CD4-positive, alpha-beta memory T cell (primary cell): ENCODE measurements at regions of chr16 and their contacts with region 1.

Region 1: DNA sequence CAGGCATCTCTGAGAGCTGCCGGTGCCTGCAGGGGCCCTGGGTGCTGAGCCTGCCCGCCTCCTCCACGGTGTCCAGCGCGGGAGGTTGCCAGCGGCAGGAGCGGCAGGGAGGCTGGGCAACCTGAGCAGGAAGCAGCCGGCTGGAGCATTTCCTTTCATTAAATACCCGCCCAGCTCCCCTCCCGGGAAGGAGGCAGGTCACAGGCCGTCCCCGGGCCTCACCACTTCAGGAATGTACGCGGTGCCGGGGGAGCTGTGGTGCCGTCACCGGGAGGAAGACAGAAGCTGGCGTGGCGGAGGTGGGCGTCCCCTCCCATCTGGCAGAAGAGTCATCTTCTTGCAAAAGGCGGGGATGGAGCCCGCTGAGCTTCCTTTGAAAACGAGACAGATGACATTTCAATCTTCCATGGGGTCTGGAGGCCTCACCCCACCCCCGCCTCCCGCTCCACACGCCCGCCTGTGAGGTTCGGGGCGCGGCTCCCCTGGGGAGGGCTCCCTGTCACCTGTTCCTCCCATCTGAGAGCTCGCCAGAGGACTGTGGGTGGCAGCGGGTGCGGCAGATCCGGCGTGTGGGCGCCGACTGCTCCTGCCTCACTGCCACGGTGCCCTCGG is 16.0 kb downstream of the SOX8 start:
- DNase-seq: peak; percentile 63 to 87 (median 68)
- H3K4me3 ChIP-seq: peak overlapping the region; percentile 47 to 55
- H3K4me3 Mint-ChIP-seq: peak overlapping the region; percentile 81 to 97 (median 86)
- H3K27ac ChIP-seq: peak overlapping the region; percentile 74
- H3K27ac Mint-ChIP-seq: peak overlapping the region; percentile 87 to 98 (median 93)
- H3K4me1 ChIP-seq: peaks cover 44% of the 10 kb centered on the region
- H3K4me1 Mint-ChIP-seq: peaks cover 16 to 54% (median 39%) of the 10 kb centered on the region in 4 donors
- H3K27me3 ChIP-seq: no peaks in the 10 kb centered on the region
- H3K27me3 Mint-ChIP-seq: no peaks in the 10 kb centered on the region

Region 2: GRCh38 chr16:964356-965042 is 33.0 kb before region 1 on chr16:
- CTCF ChIA-PET with region 1: interaction called, 6 read pairs
- POLR2A ChIA-PET with region 1: interaction called, 54 read pairs
- intact Hi-C with region 1: loop called (anchors 5 kb)
- DNase-seq: peak; percentile 74 to 92 (median 86)
- H3K4me3 ChIP-seq: peak overlapping the region; percentile 30 to 34
- H3K4me3 Mint-ChIP-seq: peak overlapping the region; percentile 69 to 88 (median 84)
- H3K27ac ChIP-seq: peak overlapping the region; percentile 70
- H3K27ac Mint-ChIP-seq: peak overlapping the region; percentile 79 to 98 (median 95)
- H3K4me1 ChIP-seq: peaks cover 37% of the 10 kb centered on the region
- H3K4me1 Mint-ChIP-seq: peaks cover 23 to 58% (median 44%) of the 10 kb centered on the region in 4 donors
- H3K27me3 ChIP-seq: no peaks in the 10 kb centered on the region
- H3K27me3 Mint-ChIP-seq: no peaks in the 10 kb centered on the region

Region 3: DNA sequence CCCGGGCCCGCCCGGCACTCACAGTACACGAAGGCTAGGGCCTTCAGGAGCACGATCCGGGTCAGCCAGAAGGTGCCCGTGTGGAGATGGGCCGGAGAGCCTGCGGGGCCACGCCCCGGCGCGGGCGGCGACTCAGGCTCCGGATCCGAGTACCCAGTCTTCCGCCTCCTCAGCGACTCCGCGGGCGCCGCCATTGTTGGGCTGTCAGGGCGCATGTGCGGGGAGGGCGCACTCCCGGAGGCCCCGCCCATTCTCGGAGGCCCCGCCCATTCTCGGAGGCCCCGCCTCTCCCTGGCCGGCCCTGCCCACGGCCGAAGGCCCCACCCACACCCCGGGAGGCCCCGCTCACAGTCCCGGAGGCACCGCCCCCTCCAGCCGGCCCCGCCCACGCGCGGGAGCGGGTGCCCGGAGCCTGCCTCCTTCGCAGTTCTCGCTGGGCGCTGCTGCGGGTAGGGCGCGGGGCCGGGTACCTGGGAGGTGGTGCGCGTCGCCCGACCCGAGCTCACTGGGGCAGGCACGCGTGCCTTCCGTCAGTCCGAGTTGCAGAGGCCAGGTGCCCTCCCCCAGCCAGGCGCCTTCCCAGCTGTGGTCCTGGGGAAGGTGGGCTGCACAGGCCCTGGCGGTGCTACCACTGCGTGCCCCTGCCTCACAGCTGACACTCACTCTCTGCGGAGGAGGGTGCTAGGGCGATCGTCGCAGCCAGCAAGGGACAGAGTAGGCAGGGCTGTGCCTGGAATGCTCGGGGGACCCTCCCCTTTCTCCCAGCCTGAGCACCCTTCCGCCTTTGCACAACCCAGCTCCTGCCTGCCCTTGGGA is 26.6 kb before region 1 on chr16 and contains the start of gene LMF1:
- CTCF ChIA-PET with region 1: interaction called, 3 read pairs
- POLR2A ChIA-PET with region 1: interaction called, 54 read pairs
- intact Hi-C with region 1: loop called (anchors 2 kb)
- DNase-seq: peak; percentile 92 to 100 (median 93)
- H3K4me3 ChIP-seq: peak within 1 kb of the TSS; percentile 23 to 82
- H3K4me3 Mint-ChIP-seq: peak within 1 kb of the TSS; percentile 67 to 90 (median 76)
- H3K27ac ChIP-seq: peak within 1 kb of the TSS; percentile 81
- H3K27ac Mint-ChIP-seq: peak within 1 kb of the TSS; percentile 28 to 89 (median 71)
- H3K4me1 ChIP-seq: peaks cover 16% of the 10 kb centered on the region
- H3K4me1 Mint-ChIP-seq: peaks cover 12 to 30% (median 21%) of the 10 kb centered on the region in 4 donors
- H3K27me3 ChIP-seq: no peaks in the 10 kb centered on the region
- H3K27me3 Mint-ChIP-seq: no peaks in the 10 kb centered on the region
- total RNA-seq, gene LMF1: 50.0 to 59.7 TPM

Region 4: GRCh38 chr16:982145-983043 is 15.2 kb before region 1 on chr16:
- CTCF ChIA-PET with region 1: interaction called, 8 read pairs
- POLR2A ChIA-PET with region 1: interaction called, 83 read pairs
- intact Hi-C with region 1: loop called (anchors 1 kb)
- DNase-seq: peak in 3 of 5 donors; percentile 33 to 40 (median 34)
- H3K4me3 ChIP-seq: peak overlapping the region in 1 of 2 donors; percentile 19
- H3K4me3 Mint-ChIP-seq: peak overlapping the region; percentile 48 to 73 (median 62)
- H3K27ac ChIP-seq: no peak overlapping the region
- H3K27ac Mint-ChIP-seq: peak overlapping the region in 3 of 7 donors; percentile 47 to 65 (median 57)
- H3K4me1 ChIP-seq: peaks cover 12% of the 10 kb centered on the region
- H3K4me1 Mint-ChIP-seq: peaks cover 6 to 8% (median 7%) of the 10 kb centered on the region in 4 donors
- H3K27me3 ChIP-seq: no peaks in the 10 kb centered on the region
- H3K27me3 Mint-ChIP-seq: peaks cover 0 to 4% of the 10 kb centered on the region in 2 donors

Region 5: DNA sequence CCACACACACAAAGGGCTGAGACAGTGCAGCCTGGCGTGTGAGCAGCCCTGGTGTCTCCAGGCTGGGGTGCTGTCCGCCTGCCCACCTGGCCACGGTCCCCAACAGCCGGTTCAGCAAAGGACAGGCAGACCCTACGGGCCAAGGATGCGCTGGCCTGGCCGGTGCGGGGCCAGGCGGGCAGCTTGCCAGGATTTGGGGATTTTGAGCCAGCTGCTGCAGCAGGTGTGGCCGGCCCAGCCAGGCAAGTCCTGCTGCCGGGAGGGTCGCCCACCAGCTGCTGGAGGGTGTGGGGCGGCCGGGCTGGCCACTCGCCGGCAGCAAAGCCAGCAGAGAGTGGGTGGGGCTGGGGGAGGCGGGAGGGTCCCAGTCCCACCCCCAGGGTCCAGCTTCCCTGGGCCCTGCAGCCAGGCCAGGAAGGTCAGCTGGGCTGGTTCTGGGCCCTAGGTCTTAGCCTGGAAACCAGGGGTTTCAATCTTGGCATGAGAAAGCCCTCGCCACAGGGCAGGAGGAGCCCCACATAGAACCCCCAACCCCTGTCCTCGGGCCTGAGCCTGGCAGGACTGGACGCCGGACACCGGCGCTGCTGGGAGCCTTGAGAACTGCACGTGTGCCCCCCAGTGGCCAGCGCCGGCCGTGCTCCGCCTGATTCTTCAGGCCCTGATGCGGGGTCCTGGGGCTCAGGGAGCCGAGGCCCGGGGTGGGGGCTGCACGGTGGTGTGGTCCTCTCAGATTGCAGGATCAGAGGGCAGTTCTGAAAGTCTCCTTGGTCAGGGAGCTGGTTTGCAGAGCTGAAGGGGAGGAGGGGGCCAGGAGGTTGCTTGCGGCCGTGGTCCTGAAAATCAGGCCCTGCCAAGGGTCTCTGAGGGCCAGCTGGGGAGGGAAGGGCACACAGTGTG is 57.4 kb after region 1 on chr16:
- CTCF ChIA-PET with region 1: interaction called, 50 read pairs
- POLR2A ChIA-PET with region 1: interaction called, 7 read pairs
- intact Hi-C with region 1: loop called (anchors 1 kb)
- DNase-seq: peak in 2 of 5 donors; percentile 7 to 10
- H3K4me3 ChIP-seq: no peak overlapping the region
- H3K4me3 Mint-ChIP-seq: no peak overlapping the region
- H3K27ac ChIP-seq: no peak overlapping the region
- H3K27ac Mint-ChIP-seq: no peak overlapping the region
- H3K4me1 ChIP-seq: no peaks in the 10 kb centered on the region
- H3K4me1 Mint-ChIP-seq: no peaks in the 10 kb centered on the region
- H3K27me3 ChIP-seq: no peaks in the 10 kb centered on the region
- H3K27me3 Mint-ChIP-seq: no peaks in the 10 kb centered on the region